ENCODE measurements at regions of chr9 and their contacts with region 1.

Region 1: GRCh38 chr9:129458663-129459555 is 162.0 kb downstream of the C9orf50 start:
- DNase-seq: peak in 41 of 42 donors; percentile 57 to 96 (median 75)

Region 2: DNA sequence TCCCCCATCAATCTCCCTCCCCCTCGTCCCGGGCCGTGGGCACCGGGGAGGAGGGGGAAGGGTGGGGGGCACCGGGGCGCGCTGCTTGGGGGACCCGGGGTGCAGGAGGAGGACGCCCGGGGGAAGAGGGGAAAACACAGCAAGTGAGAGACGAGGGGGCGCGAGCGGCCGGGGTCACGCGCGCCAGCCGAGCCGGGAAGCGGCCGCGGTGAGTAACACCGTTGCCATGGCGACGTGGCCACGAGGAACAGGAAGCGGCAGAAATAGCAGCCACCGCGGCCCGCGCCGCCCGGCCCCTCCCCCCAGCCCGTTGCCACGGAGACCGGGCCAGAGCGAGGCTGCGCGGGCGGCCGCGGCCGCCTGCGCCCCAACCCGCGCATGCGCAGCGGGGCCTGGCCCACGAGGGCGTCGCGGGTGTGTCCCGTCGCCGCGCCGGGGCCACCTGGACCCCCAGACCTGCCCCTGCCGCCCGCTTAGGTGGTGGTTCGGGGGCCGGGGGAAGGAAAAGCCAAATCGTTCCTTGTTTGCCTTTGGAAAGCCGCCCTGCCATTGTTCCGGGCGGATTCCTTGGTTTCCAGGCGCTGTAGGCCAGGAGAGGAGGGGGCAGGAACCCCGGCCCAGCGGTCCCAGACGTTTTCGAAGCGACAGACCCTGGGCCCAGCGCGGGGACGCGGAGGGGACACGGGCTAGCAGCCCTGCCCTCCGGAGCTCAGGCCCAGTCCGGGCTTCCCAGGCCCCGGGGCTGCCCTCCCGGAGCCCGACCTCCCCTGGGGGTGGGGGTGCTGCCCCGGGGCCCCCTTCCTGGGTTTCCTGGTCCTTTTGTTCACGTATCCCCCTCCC is 45.2 kb before region 1 on chr9:
- intact Hi-C with region 1: loop called (anchors 5 kb)
- DNase-seq: peak; percentile 96 to 100 (median 99)